ENCODE measurements at regions of chr22 and their contacts with region 1.

Region 1: DNA sequence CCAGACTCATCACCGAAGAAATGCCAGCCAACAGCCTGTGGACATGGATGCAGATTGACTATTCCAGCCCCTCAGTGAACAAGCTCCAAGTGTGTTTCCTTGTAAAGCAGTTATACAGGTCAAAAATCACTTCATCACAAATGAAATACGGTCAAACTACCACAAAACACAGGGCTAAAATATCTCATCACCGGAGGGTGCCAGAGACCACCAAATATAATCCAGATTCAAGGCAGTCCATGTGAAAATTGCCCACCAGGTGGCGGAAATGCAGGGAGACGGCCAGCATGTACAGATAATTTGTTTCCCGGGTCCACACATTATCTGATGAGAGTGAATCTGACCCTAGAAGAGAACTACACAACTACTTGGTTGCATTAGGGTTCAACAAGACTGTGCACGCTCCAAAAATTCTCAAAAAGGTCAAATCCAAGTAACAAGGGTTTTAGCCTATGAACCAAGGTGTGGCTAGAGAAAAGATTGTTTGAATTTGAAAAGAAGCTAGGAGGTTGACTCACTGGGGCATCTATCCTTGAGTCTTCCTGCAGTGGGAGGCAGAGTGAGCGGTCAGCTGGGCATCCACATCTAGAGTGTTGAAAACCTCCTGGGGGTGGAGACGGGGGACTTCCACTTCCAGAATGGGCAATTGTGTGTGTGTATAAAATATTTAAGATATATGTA is 71.7 kb downstream of the IGLL5 start:
- DNase-seq: peak; percentile 31
- H3K4me3 ChIP-seq: no peak overlapping the region
- CTCF ChIP-seq: peak; percentile 73

Region 2: GRCh38 chr22:22753526-22754267 is 205.6 kb before region 1 on chr22:
- CTCF ChIA-PET with region 1: interaction called, 28 read pairs
- POLR2A ChIA-PET with region 1: no interaction called
- DNase-seq: no peak
- H3K4me3 ChIP-seq: no peak overlapping the region
- CTCF ChIP-seq: peak; percentile 72

Region 3: DNA sequence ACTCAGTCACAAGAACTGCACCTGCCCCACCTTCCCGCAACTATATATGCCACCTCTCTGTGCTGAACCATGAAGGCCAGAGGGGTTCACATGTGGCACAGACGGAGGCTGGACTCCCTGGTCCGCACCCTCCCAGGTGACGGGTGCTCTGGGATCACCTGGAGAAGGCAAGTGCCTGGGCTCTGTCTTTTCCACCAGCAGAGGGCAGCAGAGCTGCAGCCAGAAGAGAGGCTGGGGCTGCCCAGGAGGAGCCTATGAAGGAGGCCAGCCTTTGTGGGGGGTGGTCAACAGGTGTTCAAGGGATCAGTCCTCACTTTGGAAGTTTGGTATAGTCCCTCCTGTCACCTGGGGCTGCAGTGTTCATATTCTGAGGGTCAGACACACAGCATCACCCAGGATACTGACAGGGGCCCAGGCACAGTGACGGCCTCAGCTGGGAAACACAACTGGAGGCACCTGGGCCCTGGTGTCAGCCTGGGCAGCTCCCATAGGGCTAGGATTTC is 110.9 kb before region 1 on chr22:
- CTCF ChIA-PET with region 1: interaction called, 174 read pairs
- POLR2A ChIA-PET with region 1: no interaction called
- DNase-seq: no peak
- H3K4me3 ChIP-seq: no peak overlapping the region
- CTCF ChIP-seq: peak; percentile 88

Region 4: GRCh38 chr22:22877523-22878210 is 81.6 kb before region 1 on chr22:
- CTCF ChIA-PET with region 1: no interaction called
- POLR2A ChIA-PET with region 1: no interaction called
- DNase-seq: no peak
- H3K4me3 ChIP-seq: no peak overlapping the region
- CTCF ChIP-seq: peak; percentile 81

Region 5: GRCh38 chr22:22948651-22949571 is 10.4 kb before region 1 on chr22:
- CTCF ChIA-PET with region 1: interaction called, 33 read pairs
- POLR2A ChIA-PET with region 1: no interaction called
- DNase-seq: no peak
- H3K4me3 ChIP-seq: no peak overlapping the region
- CTCF ChIP-seq: no peak

Region 6: GRCh38 chr22:23029521-23030228 is 70.4 kb after region 1 on chr22:
- CTCF ChIA-PET with region 1: no interaction called
- POLR2A ChIA-PET with region 1: no interaction called
- DNase-seq: no peak
- H3K4me3 ChIP-seq: no peak overlapping the region
- CTCF ChIP-seq: no peak

Region 7: DNA sequence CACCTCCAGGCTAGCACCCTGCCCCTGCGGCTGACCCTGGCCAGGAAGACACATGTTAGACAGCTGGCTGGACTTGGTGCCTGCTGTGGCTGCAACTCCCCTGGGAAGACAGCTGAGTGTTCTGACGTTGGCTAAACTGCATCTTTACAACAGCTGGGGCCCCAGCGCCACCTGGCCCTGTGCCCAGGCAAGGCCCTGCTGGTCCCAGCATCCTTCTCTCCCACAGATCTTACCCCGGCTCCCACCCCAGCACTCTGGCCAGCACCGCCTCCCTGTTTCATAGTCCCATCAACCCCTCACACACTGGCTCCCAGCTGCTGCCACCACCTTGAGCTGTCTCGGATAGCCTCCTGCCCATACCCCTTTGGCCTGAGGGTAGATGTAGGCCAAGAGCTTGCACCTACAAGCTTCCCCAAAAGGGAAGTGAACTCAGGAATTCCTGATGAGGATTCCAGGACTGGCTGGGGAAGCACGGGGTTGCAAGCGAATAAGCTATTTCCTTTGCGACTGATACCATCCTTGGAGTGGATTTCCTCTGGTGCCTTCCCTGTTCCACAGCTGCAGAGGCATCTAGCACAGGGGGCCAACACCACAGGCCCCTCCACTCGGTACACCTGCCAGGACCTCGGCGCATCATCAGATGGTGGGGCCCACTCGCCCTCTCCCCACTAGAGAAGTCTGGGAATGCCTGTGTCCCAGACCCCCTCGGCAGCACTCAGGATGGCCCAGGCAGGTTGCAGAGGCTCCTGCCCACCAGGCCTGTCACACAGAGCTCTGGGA is 154.0 kb after region 1 on chr22:
- CTCF ChIA-PET with region 1: interaction called, 800 read pairs
- POLR2A ChIA-PET with region 1: no interaction called
- DNase-seq: no peak
- H3K4me3 ChIP-seq: no peak overlapping the region
- CTCF ChIP-seq: no peak

Region 8: DNA sequence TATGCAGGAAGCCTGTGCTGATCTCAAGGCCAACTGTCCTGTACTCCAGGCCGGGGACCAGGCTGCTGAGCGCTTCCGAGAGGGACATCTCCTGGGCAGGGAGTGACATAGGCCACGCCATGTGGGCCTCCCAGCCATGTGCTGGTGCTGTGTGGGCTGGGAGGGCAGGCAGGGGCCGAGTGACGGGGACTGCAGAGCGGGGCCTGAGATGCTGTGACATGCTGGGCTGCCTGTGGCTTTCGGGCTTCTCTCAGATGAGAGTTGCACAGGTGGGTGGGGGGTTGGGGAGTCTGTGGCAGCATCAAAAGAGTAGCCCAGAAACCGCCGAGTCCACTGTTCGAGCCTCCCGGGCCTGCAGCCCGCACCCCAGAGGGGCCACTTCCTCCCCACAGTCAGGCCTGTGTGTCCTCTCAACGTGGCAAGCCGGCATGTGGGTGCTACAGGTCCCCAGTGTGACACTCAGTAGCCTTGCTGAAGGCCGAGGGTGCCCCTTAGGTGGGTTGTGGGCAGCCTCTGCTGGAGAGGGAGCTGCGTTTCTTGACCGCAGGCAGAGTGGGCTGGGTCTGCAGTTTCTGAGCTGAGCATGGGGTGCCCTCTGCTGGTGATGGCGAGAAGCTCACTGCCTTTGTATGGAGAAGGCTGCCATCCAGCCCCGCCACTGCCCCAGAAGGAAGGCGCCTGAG is 322.3 kb after region 1 on chr22:
- CTCF ChIA-PET with region 1: interaction called, 10 read pairs
- POLR2A ChIA-PET with region 1: no interaction called
- DNase-seq: no peak
- H3K4me3 ChIP-seq: no peak overlapping the region
- CTCF ChIP-seq: peak; percentile 96